B cell (primary cell): ENCODE measurements at regions of chr2 and their contacts with region 1.

Region 1: GRCh38 chr2:46776687-46777327 is 138.8 kb downstream of the MCFD2 start:
- DNase-seq: peak; percentile 60
- ATAC-seq: no peak
- H3K4me3 ChIP-seq: no peak overlapping the region
- H3K4me3 Mint-ChIP-seq: no peak overlapping the region
- H3K27ac ChIP-seq: no peak overlapping the region
- H3K27ac Mint-ChIP-seq: no peak overlapping the region
- H3K4me1 ChIP-seq: no peaks in the 10 kb centered on the region
- H3K4me1 Mint-ChIP-seq: no peaks in the 10 kb centered on the region
- H3K27me3 ChIP-seq: no peaks in the 10 kb centered on the region
- H3K27me3 Mint-ChIP-seq: peaks cover 7% of the 10 kb centered on the region
- CTCF ChIP-seq: peak; percentile 86

Region 2: GRCh38 chr2:45275242-45275805 is 1501.5 kb before region 1 on chr2:
- CTCF ChIA-PET with region 1: no interaction called
- POLR2A ChIA-PET with region 1: no interaction called
- intact Hi-C with region 1: no loop called
- DNase-seq: no peak
- ATAC-seq: no peak
- H3K4me3 ChIP-seq: no peak overlapping the region
- H3K4me3 Mint-ChIP-seq: no peak overlapping the region
- H3K27ac ChIP-seq: no peak overlapping the region
- H3K27ac Mint-ChIP-seq: no peak overlapping the region
- H3K4me1 ChIP-seq: no peaks in the 10 kb centered on the region
- H3K4me1 Mint-ChIP-seq: no peaks in the 10 kb centered on the region
- H3K27me3 ChIP-seq: peaks cover 0 to 3% (median 0%) of the 10 kb centered on the region in 4 experiments
- H3K27me3 Mint-ChIP-seq: peaks cover 11% of the 10 kb centered on the region
- CTCF ChIP-seq: no peak

Region 3: GRCh38 chr2:46632349-46632748 is 144.5 kb before region 1 on chr2:
- CTCF ChIA-PET with region 1: interaction called, 3 read pairs
- POLR2A ChIA-PET with region 1: no interaction called
- intact Hi-C with region 1: loop called (anchors 1 kb)
- DNase-seq: peak; percentile 44
- ATAC-seq: no peak
- H3K4me3 ChIP-seq: no peak overlapping the region
- H3K4me3 Mint-ChIP-seq: no peak overlapping the region
- H3K27ac ChIP-seq: no peak overlapping the region
- H3K27ac Mint-ChIP-seq: no peak overlapping the region
- H3K4me1 ChIP-seq: no peaks in the 10 kb centered on the region
- H3K4me1 Mint-ChIP-seq: peaks cover 7% of the 10 kb centered on the region
- H3K27me3 ChIP-seq: no peaks in the 10 kb centered on the region
- H3K27me3 Mint-ChIP-seq: no peaks in the 10 kb centered on the region
- CTCF ChIP-seq: peak; percentile 61

Region 4: DNA sequence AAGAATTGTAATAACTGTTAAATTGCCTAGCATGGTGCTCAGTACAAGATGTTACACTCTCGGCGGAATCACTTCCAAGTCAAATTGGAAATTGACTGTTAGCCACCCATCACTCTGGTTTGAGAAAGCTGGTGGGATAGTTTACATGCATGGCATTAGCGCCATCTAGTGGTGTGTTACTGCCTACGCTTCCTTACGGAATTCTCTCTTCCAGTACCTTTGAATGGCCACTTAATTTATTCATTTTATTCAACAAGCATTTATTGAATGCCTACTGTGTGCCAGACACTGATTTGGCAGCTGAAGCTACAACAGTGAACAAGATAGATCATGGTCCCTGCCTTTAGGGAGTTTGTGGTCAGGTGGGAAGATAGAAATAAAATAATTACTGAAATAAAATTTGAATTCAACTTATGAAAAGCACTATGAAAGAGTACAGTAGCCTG is 126.2 kb before region 1 on chr2:
- CTCF ChIA-PET with region 1: interaction called, 50 read pairs
- POLR2A ChIA-PET with region 1: no interaction called
- intact Hi-C with region 1: no loop called
- DNase-seq: peak; percentile 83
- ATAC-seq: peak; percentile 70
- H3K4me3 ChIP-seq: no peak overlapping the region
- H3K4me3 Mint-ChIP-seq: no peak overlapping the region
- H3K27ac ChIP-seq: no peak overlapping the region
- H3K27ac Mint-ChIP-seq: no peak overlapping the region
- H3K4me1 ChIP-seq: no peaks in the 10 kb centered on the region
- H3K4me1 Mint-ChIP-seq: no peaks in the 10 kb centered on the region
- H3K27me3 ChIP-seq: no peaks in the 10 kb centered on the region
- H3K27me3 Mint-ChIP-seq: peaks cover 6% of the 10 kb centered on the region
- CTCF ChIP-seq: peak; percentile 97

Region 5: DNA sequence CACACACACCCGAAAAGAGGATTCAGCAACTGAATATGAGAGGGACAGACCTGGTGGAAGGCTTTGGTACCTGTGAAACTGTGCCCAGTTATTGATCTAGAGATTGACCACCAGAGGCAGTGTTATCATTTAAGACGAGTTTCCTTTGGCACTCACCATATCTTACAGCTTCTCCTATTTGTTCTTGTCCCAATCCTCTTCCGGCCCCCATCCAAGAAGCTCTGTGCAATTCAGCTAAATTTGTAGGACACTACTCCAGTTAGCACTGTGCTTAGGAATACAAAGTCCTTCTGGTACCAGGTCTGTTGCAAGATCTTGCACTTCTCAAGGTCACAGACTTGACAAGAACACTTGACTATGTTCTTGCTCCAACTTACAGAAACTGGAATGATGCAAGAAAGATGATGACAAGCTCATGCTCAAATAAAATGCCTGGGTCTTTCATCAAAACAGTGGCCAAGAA is 119.7 kb before region 1 on chr2:
- CTCF ChIA-PET with region 1: interaction called, 50 read pairs
- POLR2A ChIA-PET with region 1: no interaction called
- intact Hi-C with region 1: loop called (anchors 1 kb)
- DNase-seq: peak; percentile 50
- ATAC-seq: no peak
- H3K4me3 ChIP-seq: no peak overlapping the region
- H3K4me3 Mint-ChIP-seq: no peak overlapping the region
- H3K27ac ChIP-seq: no peak overlapping the region
- H3K27ac Mint-ChIP-seq: no peak overlapping the region
- H3K4me1 ChIP-seq: peaks cover 3% of the 10 kb centered on the region in 2 donors
- H3K4me1 Mint-ChIP-seq: peaks cover 6% of the 10 kb centered on the region
- H3K27me3 ChIP-seq: peaks cover 0 to 2% (median 0%) of the 10 kb centered on the region in 4 experiments
- H3K27me3 Mint-ChIP-seq: peaks cover 6% of the 10 kb centered on the region
- CTCF ChIP-seq: peak; percentile 62

Region 6: GRCh38 chr2:46706264-46706983 is 70.4 kb before region 1 on chr2:
- CTCF ChIA-PET with region 1: interaction called, 11 read pairs
- POLR2A ChIA-PET with region 1: no interaction called
- intact Hi-C with region 1: no loop called
- DNase-seq: no peak
- ATAC-seq: no peak
- H3K4me3 ChIP-seq: no peak overlapping the region
- H3K4me3 Mint-ChIP-seq: no peak overlapping the region
- H3K27ac ChIP-seq: no peak overlapping the region
- H3K27ac Mint-ChIP-seq: no peak overlapping the region
- H3K4me1 ChIP-seq: peaks cover 0 to 50% of the 10 kb centered on the region in 2 donors
- H3K4me1 Mint-ChIP-seq: peaks cover 51% of the 10 kb centered on the region
- H3K27me3 ChIP-seq: no peaks in the 10 kb centered on the region
- H3K27me3 Mint-ChIP-seq: no peaks in the 10 kb centered on the region
- CTCF ChIP-seq: no peak

Region 7: GRCh38 chr2:46787364-46787763 is 10.6 kb after region 1 on chr2:
- CTCF ChIA-PET with region 1: interaction called, 10 read pairs
- POLR2A ChIA-PET with region 1: no interaction called
- intact Hi-C with region 1: no loop called
- DNase-seq: no peak
- ATAC-seq: no peak
- H3K4me3 ChIP-seq: no peak overlapping the region
- H3K4me3 Mint-ChIP-seq: no peak overlapping the region
- H3K27ac ChIP-seq: no peak overlapping the region
- H3K27ac Mint-ChIP-seq: no peak overlapping the region
- H3K4me1 ChIP-seq: no peaks in the 10 kb centered on the region
- H3K4me1 Mint-ChIP-seq: no peaks in the 10 kb centered on the region
- H3K27me3 ChIP-seq: no peaks in the 10 kb centered on the region
- H3K27me3 Mint-ChIP-seq: peaks cover 8% of the 10 kb centered on the region
- CTCF ChIP-seq: no peak